HEK293 (cell line): ENCODE measurements at regions of chr18 and their contacts with region 1.

Region 1: GRCh38 chr18:12271376-12272235 is 17.4 kb downstream of the CIDEA start:
- H3K4me3 ChIP-seq: peak overlapping the region; percentile 49
- H3K27ac ChIP-seq: peak overlapping the region; percentile 70
- H3K4me1 ChIP-seq: no peaks in the 10 kb centered on the region
- CTCF ChIP-seq: peak; percentile 94

Region 2: GRCh38 chr18:12076424-12077140 is 195.0 kb before region 1 on chr18:
- CTCF ChIA-PET with region 1: no interaction called
- POLR2A ChIA-PET with region 1: no interaction called
- H3K4me3 ChIP-seq: peak overlapping the region; percentile 28
- H3K27ac ChIP-seq: peak overlapping the region; percentile 74
- H3K4me1 ChIP-seq: no peaks in the 10 kb centered on the region
- CTCF ChIP-seq: no peak

Region 3: GRCh38 chr18:12236934-12237832 is 34.4 kb before region 1 on chr18:
- CTCF ChIA-PET with region 1: interaction called, 25 read pairs
- POLR2A ChIA-PET with region 1: interaction called, 4 read pairs
- H3K4me3 ChIP-seq: no peak overlapping the region
- H3K27ac ChIP-seq: no peak overlapping the region
- H3K4me1 ChIP-seq: no peaks in the 10 kb centered on the region
- CTCF ChIP-seq: peak; percentile 86

Region 4: DNA sequence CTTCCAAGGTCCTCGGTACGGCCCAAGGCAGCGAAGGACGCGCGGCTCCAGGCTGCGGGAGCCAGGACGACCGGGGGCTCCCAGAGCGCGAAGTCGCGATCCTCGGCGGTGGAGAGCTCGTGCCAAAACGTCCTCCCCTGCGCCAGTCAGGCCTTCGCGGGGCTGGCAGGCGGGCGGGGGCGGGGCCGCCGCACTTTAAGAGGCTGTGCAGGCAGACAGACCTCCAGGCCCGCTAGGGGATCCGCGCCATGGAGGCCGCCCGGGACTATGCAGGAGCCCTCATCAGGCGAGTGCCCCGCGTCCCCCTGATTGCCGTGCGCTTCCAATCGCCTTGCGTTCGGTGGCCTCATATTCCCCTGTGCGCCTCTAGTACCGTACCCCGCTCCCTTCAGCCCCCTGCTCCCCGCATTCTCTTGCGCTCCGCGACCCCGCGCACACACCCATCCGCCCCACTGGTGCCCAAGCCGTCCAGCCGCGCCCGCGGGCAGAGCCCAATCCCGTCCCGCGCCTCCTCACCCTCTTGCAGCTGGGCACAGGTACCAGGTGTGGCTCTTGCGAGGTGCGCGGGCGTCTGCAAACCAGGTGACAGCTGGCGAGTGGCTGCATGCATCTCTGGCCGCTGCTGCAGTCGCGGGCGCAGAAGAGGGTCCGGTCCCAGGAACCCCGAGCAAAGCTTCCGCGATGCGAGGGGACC is 17.3 kb before region 1 on chr18 and contains the start of gene CIDEA:
- CTCF ChIA-PET with region 1: interaction called, 21 read pairs
- POLR2A ChIA-PET with region 1: interaction called, 5 read pairs
- H3K4me3 ChIP-seq: no peak within 1 kb of the TSS
- H3K27ac ChIP-seq: no peak within 1 kb of the TSS
- H3K4me1 ChIP-seq: no peaks in the 10 kb centered on the region
- CTCF ChIP-seq: no peak

Region 5: GRCh38 chr18:12287684-12288402 is 16.2 kb after region 1 on chr18:
- CTCF ChIA-PET with region 1: interaction called, 40 read pairs
- POLR2A ChIA-PET with region 1: interaction called, 20 read pairs
- H3K4me3 ChIP-seq: peak overlapping the region; percentile 33
- H3K27ac ChIP-seq: no peak overlapping the region
- H3K4me1 ChIP-seq: no peaks in the 10 kb centered on the region
- CTCF ChIP-seq: no peak; the same call in 1 of the 2 replicates

Region 6: DNA sequence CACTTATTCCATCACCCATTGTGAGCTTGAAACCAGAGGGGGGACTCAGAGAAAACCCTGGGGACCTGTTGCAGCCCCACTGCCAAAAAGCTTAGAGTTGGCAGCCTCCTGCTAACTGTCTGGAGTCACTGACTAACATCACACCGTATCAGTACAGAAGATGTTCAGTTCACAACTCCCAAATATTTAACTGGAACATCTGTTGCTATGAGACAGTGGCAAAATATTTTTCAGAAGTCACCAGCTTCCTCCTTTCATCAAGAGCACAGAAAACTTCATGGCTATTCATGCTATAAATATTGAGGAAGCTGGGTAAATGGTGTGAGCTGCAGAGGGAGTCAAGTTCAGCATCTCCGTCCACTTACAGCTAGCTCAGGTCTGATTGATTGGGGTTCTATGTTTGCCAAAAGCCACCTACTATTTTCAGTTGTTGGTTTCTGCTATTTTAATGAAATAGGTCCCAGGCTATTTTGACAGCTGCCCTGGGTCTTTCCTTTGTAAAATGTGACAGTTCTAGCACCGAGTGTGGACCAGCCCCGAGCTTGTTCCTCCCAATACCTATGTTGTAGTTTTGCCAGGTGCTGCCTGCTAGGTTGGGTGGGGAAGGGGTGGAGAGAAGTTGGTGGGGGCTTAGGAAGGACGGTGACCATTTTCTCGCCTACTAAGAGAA is 46.2 kb after region 1 on chr18:
- CTCF ChIA-PET with region 1: interaction called, 15 read pairs
- POLR2A ChIA-PET with region 1: interaction called, 4 read pairs
- H3K4me3 ChIP-seq: no peak overlapping the region
- H3K27ac ChIP-seq: no peak overlapping the region
- H3K4me1 ChIP-seq: 0 out of 2 replicates have a peak, but pooled peaks cover 2% of the 10 kb centered on the region
- CTCF ChIP-seq: no peak

Region 7: GRCh38 chr18:12352188-12352587 is 80.6 kb after region 1 on chr18:
- CTCF ChIA-PET with region 1: no interaction called
- POLR2A ChIA-PET with region 1: no interaction called
- H3K4me3 ChIP-seq: no peak overlapping the region
- H3K27ac ChIP-seq: no peak overlapping the region
- H3K4me1 ChIP-seq: no peaks in the 10 kb centered on the region
- CTCF ChIP-seq: no peak